ENCODE measurements at regions of chr15 and their contacts with region 1.

Region 1: GRCh38 chr15:65856821-65857455 is 12.4 kb upstream of the RAB11A start:
- DNase-seq: peak; percentile 85
- H3K4me3 Mint-ChIP-seq: peak overlapping the region; percentile 35
- H3K27ac Mint-ChIP-seq: no peak overlapping the region
- H3K4me1 Mint-ChIP-seq: peaks cover 8% of the 10 kb centered on the region
- H3K27me3 Mint-ChIP-seq: no peaks in the 10 kb centered on the region

Region 2: DNA sequence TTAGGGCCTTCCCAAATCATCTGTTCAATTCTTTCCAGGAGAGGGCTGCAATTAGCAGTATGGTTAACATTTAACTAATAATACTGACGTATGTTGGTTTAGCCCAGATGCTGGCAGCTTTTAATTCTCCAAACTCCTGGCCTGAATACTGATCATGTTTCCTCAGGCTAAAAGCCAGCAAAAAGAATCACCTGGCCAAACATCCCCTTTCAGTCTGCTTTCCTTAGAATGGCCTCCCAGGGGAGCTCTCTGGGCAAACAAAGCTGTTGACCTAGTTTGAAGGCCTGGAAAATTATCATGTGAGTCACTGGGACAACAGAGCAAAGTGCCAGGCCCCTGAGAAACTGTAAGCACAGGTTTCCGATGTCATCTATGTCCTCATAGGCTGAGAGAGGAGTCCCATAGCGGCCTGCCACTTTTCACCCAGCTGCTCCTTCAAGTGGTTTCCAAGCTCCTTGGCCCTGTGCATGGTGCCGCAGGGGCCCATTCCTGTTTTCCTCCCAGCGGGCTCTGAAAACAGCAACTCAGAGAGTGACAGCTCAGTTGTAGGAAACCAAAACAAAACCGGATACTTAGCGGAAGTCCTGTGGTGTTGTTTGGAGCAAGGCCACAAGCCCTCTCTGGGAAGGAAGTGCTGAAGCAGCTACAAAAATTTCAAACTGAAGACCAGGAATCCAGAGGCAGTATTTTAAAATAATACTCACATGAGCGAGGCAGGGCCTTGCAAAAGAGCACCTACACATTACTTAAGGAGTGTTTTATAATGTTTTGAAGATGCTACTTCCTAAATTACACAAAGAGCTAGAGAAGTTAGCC is 24.2 kb before region 1 on chr15:
- CTCF ChIA-PET with region 1: interaction called, 25 read pairs
- POLR2A ChIA-PET with region 1: no interaction called
- intact Hi-C with region 1: loop called (anchors 2 kb)
- DNase-seq: peak; percentile 72
- H3K4me3 Mint-ChIP-seq: peak overlapping the region; percentile 68
- H3K27ac Mint-ChIP-seq: peak overlapping the region; percentile 94
- H3K4me1 Mint-ChIP-seq: peaks cover 45% of the 10 kb centered on the region
- H3K27me3 Mint-ChIP-seq: no peaks in the 10 kb centered on the region

Region 3: GRCh38 chr15:65841121-65841925 is 15.6 kb before region 1 on chr15:
- CTCF ChIA-PET with region 1: interaction called, 25 read pairs
- POLR2A ChIA-PET with region 1: no interaction called
- intact Hi-C with region 1: no loop called
- DNase-seq: no peak
- H3K4me3 Mint-ChIP-seq: no peak overlapping the region
- H3K27ac Mint-ChIP-seq: no peak overlapping the region
- H3K4me1 Mint-ChIP-seq: no peaks in the 10 kb centered on the region
- H3K27me3 Mint-ChIP-seq: no peaks in the 10 kb centered on the region

Region 4: GRCh38 chr15:66306381-66306780 is 449.4 kb after region 1 on chr15:
- CTCF ChIA-PET with region 1: no interaction called
- POLR2A ChIA-PET with region 1: no interaction called
- intact Hi-C with region 1: no loop called
- DNase-seq: no peak
- H3K4me3 Mint-ChIP-seq: no peak overlapping the region
- H3K27ac Mint-ChIP-seq: no peak overlapping the region
- H3K4me1 Mint-ChIP-seq: no peaks in the 10 kb centered on the region
- H3K27me3 Mint-ChIP-seq: no peaks in the 10 kb centered on the region